ENCODE measurements at regions of chr6 and their contacts with region 1.

Region 1: DNA sequence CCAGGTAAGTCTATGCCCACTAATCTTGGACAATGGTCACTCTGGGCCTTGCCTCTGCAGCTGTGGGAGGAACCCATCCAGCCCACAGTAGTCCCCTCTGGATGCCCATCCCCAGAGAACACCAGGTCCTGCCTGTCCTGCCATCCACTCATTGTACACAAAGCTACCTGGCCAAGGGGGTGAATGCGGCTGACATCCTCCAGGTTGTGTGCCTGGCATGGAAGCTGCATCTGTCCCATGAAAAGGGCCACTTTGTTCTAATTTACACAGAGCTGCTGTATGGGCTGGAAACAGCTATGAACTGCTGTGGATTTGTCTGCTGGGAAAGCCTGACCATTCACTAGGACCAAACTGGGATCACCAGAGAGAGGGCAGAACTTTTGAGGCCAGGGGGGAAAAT is 324.8 kb downstream of the LRFN2 start:
- DNase-seq: no peak
- ATAC-seq: no peak
- H3K4me3 ChIP-seq: no peak overlapping the region
- H3K27ac ChIP-seq: no peak overlapping the region
- H3K4me1 ChIP-seq: no peaks in the 10 kb centered on the region
- H3K27me3 ChIP-seq: peaks cover 3 to 13% of the 10 kb centered on the region in 2 experiments; a peak in 1 of 5 replicates
- CTCF ChIP-seq: no peak
- EP300 ChIP-seq: no peak
- POLR2A ChIP-seq: no peak
- RAD21 ChIP-seq: no peak

Region 2: DNA sequence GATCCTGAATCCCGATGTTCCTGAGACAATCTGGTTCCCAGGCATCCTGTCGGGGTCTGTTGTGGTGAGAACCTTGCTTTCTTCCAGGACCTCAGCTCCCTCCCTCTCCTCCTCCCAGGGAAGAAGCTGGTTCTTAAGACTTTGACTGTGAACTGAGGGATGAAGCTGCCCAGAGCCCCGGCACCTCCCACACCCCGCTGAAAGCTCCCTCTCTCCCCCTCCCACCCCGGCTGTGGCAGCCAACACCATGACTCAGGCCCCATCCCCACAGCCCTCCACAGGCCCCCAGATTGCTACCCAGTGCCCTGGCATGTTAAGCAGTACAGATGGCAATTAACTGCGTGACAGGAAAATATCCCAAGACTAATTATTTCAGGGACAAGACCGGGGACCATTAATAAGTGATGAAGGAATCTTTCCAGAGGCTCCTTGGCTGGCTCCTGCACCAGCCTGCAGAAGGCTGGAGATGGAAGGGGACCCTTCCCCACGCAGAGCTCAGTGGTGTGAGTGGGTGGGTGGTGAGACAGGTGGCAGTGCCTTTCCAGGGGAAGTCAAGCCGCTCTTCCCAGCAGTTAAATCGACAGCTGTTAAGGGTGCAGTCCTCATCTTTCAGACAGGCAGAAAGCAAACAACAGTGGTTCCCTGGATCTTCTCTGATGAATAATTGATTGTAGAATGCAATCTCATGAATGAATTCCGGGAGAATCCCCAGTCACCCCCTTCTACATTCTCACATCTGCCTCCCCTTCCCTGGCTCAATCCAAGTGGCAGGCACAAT is 86.9 kb after region 1 on chr6:
- CTCF ChIA-PET with region 1: no interaction called
- POLR2A ChIA-PET with region 1: no interaction called
- in situ Hi-C with region 1: loop called (anchors 5 kb)
- intact Hi-C with region 1: no loop called
- DNase-seq: peak in 1 of 4 experiments; percentile 1
- ATAC-seq: no peak
- H3K4me3 ChIP-seq: no peak overlapping the region
- H3K27ac ChIP-seq: no peak overlapping the region
- H3K4me1 ChIP-seq: no peaks in the 10 kb centered on the region; a peak in 1 of 5 replicates
- H3K27me3 ChIP-seq: peaks cover 0 to 19% of the 10 kb centered on the region in 2 experiments; a peak in 2 of 5 replicates
- CTCF ChIP-seq: no peak
- EP300 ChIP-seq: no peak
- POLR2A ChIP-seq: no peak
- RAD21 ChIP-seq: no peak